ENCODE measurements at regions of chr1 and their contacts with region 1.

Region 1: DNA sequence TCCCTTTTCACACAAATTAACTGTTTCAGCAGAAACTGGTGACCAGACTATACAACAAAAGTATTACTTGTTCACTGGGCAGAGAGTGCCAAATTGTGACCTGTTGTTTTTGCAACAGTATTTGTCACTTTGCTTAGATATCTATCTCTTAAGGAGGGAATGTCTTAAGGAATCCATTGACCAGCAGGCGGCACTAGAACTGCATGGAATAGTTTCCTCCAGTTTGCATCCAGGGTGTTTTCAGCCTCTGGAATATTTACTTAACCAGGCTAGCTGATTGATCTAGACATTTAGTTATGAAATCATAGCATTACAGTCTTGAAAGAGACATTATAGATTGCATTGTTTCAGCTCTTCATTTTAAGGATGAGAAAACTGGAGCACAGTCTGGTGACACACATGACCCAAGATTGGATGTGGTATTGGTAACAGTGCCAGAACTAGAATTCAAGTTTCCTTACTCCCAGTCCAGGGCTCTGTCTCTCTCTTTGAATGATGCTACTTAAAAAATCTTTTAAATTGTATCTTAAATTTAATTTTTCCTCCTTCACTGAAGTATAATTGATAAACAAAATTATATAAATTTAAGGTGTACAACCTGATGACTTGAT is 16.9 kb downstream of the RPTN start:
- DNase-seq: peak; percentile 44 to 72 (median 48)
- ATAC-seq: peak; percentile 51 to 53
- H3K4me3 ChIP-seq: no peak overlapping the region
- H3K27ac ChIP-seq: no peak overlapping the region
- H3K4me1 ChIP-seq: no peaks in the 10 kb centered on the region
- H3K27me3 ChIP-seq: peaks cover 2% of the 10 kb centered on the region

Region 2: DNA sequence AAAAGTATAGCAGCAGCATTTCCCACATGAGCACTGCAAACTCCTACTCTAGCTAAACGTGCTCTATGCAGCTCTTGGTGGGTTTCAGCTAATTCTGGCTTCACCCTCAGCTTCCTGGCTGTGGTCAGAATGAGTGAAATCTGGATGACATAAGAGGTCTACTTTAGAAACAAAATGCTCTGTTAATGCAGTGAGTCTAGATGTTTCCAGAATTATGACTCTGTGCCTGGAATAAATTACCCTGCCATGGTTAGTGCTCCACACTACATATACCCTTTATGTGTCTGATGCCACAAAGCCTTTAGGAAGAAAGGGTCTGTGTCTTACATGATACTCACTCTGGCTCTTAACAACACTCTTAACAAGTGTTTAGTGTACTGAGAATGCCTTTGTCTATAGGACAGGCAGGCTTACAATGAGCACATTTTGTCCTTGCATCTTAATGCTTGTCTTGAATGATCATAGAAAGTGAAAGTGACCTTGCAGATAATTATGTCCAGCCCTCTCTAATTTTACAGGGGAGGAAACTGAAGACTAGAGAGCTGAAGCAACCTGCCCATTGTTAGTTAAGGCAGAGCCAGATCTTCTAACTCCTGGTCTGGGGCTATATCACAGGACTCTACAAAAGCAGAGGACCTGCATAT is 157.6 kb before region 1 on chr1:
- intact Hi-C with region 1: no loop called
- DNase-seq: no peak
- ATAC-seq: no peak
- H3K4me3 ChIP-seq: no peak overlapping the region
- H3K27ac ChIP-seq: no peak overlapping the region
- H3K4me1 ChIP-seq: peaks cover 12% of the 10 kb centered on the region
- H3K27me3 ChIP-seq: no peaks in the 10 kb centered on the region

Region 3: DNA sequence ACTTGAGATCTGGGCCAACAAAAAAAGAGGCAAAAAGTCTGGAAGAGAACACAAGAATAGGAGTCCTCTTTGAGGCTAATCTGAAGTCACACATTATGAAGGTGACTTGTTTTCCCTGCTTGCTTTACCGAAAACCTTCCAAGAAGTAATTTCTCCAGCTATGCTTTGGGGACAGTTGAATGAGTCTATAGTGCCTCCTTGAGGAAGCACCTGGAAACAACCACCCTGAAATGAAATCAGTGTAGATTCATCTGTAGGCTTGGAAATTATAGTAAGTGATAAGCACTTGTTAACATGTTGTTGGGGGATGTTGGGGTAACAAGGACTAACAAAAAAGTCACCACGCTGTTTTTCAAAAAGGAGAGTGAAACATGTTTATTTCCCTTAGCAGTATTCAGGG is 40.4 kb after region 1 on chr1:
- intact Hi-C with region 1: loop called in 3 of 4 experiments (anchors 2 to 5 kb)
- DNase-seq: no peak
- ATAC-seq: no peak
- H3K4me3 ChIP-seq: no peak overlapping the region
- H3K27ac ChIP-seq: no peak overlapping the region
- H3K4me1 ChIP-seq: no peaks in the 10 kb centered on the region
- H3K27me3 ChIP-seq: no peaks in the 10 kb centered on the region

Region 4: DNA sequence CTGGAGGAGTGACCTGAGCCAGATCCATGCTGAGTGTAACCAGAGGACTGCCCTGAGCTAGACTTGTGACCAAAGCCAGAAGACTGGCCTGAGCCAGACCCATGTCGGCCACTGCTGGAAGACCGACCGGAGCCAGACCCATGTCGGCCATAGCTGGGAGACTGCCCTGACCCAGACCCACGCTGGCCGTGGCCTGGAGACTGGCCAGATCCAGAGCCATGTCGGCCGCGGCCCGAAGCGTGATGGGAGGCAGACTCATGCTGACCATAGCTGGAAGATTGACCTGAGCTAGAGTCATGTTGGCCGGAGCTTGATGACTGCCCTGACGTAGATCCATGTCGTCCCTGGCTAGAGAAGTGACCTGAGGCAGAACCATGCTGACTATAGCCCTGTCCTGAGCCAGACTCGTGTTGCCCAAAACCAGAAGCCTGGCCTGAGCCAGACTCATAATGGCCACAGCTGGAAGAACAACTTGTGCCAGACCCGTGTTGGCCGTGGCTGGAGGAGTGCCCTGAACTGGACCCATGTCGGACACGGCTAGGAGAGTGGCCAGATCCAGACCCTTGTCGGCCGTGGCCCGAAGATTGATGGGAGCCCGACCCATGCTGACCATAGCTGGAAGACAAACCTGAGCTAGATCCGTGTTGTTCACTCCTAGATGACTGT is 76.8 kb after region 1 on chr1:
- intact Hi-C with region 1: no loop called
- DNase-seq: peak in 1 of 3 donors; percentile 16
- ATAC-seq: no peak
- H3K4me3 ChIP-seq: no peak overlapping the region
- H3K27ac ChIP-seq: no peak overlapping the region
- H3K4me1 ChIP-seq: no peaks in the 10 kb centered on the region
- H3K27me3 ChIP-seq: no peaks in the 10 kb centered on the region

Region 5: DNA sequence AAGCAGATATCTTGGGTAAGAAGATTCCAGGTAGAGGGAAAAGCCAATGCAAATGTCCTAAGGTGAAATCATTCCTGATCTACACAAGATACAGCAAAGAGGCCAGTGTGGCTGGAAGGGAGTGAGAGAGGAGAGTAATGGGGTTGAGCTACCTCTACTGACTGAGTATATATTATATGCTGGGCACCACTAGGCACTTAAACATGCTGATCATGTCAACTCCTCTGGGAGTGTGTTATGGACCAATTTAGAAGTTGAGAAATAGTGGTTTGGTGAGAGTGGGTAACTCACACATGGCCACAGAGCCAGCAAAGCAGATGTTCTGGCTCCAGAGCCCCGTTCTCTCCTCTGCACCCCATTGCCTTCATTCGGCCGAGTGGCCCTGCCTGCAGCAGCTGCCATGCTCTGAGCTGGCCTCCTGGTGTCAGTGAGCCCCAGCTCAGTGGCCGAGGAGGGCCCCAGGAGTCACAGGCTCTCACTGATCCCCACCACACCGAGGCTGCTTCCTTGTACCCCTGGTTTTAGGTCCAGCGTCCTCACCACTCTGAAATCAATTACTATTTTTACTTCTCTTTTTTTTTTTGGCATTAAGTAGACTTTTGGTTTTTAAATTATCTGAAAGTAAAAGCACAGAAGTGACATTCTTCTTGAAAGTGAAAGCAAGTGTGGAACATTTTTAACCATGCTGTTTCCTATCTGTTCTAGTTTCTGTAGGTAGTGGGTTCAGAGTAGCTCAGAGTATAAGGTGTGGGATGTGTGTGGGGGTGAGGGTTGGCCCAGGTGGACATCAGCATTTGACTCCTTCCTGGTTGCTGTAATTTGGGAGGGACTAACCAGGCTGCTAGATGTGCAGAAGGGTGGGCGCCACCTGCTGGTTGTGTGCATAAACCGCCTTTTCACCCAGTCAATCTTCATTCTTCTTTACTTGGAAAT is 317.8 kb after region 1 on chr1:
- intact Hi-C with region 1: loop called in 2 of 4 experiments (anchors 5 kb)
- DNase-seq: peak; percentile 70 to 86 (median 85)
- ATAC-seq: peak; percentile 68 to 81
- H3K4me3 ChIP-seq: no peak overlapping the region
- H3K27ac ChIP-seq: no peak overlapping the region
- H3K4me1 ChIP-seq: no peaks in the 10 kb centered on the region
- H3K27me3 ChIP-seq: no peaks in the 10 kb centered on the region

Region 6: GRCh38 chr1:153141377-153141776 is 999.3 kb after region 1 on chr1:
- intact Hi-C with region 1: no loop called
- DNase-seq: no peak
- ATAC-seq: no peak
- H3K4me3 ChIP-seq: no peak overlapping the region
- H3K27ac ChIP-seq: no peak overlapping the region
- H3K4me1 ChIP-seq: no peaks in the 10 kb centered on the region
- H3K27me3 ChIP-seq: no peaks in the 10 kb centered on the region

Measured in right cardiac atrium (tissue), 5 donors.